CD14-positive monocyte (primary cell): ENCODE measurements at regions of chr20 and their contacts with region 1.

Region 1: DNA sequence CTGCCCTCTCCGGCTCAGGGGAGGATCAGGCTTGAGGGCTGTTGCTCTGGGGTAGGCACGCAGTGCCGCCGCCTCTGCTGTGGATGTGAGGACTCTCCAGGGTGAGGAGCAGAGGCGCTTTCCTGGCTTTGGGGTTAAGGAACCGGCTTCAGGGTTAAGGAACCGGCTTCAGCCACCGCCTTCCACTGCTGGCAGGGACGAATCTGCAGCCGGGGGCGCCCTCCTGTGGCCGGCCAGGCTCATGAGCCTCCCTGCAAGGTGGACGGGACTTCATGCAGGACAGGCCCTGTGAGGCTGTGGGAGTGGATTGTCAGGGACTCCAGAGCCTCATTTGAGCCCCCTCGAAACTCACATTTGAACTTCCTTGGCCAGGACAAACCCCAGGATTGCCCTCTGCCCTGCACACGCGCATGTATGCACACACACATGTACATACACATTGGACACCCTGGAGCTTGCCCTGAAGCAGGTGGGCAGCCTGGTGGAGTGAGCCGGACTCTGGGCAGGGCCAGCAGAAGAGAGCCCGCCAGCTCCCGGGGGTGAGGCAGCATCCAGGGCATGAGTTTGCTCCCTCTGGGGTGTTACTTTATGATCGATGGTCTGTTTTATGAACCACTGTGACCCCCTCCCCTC is 146.8 kb downstream of the PHACTR3 start:
- DNase-seq: peak; percentile 57 to 73 (median 69)
- H3K4me3 ChIP-seq: no peak overlapping the region
- H3K4me3 Mint-ChIP-seq: peak overlapping the region in 1 of 2 donors; percentile 88
- H3K27ac ChIP-seq: no peak overlapping the region
- H3K27ac Mint-ChIP-seq: peak overlapping the region in 2 of 7 donors; percentile 42 to 51
- H3K4me1 ChIP-seq: peaks cover 33 to 37% of the 10 kb centered on the region in 2 donors
- H3K4me1 Mint-ChIP-seq: peaks cover 37% of the 10 kb centered on the region
- H3K27me3 ChIP-seq: peaks cover 14 to 70% of the 10 kb centered on the region in 2 donors
- H3K27me3 Mint-ChIP-seq: peaks cover 76 to 93% (median 80%) of the 10 kb centered on the region in 3 donors
- CTCF ChIP-seq: peak; percentile 90

Region 2: DNA sequence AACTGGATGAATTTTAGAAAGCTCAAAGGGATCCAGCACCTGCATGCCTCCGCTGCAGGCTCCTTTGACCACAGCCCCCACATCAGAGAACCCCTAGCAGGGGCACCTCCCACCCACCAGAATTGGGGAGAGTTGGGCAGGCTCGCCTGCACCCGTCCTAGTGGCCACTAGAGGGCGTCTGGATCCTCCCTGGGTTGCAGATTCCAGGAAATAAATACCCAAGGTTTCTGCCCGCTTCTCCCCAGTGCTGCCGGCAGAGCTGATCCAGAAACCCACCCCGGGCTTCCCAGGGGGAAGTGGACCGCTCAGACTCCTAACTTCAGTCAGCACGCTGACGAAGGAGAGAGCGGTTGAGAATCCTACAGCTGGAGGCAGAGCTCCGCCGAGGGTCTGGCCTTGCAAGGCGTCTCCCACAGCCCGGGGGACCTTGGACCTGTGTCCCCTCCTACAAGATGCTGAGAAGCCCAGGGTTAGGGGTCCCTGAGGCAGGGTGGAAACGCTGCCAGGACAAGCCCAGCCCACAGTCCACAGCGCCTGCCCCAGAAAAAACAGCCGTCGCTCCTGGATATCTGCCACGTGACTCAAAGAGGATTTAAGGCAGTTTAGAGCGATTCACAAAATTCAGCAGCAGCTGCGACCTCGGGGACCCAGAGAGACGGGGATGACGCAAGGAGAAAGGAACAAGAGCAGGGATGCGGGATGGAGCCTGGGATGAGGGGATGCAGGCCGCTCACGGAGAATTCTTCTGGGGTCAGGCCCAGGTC is 179.4 kb before region 1 on chr20:
- intact Hi-C with region 1: loop called (anchors 2 to 5 kb)
- DNase-seq: peak; percentile 29 to 54 (median 48)
- H3K4me3 ChIP-seq: peak overlapping the region; percentile 6 to 66 (median 14)
- H3K4me3 Mint-ChIP-seq: peak overlapping the region; percentile 65 to 78
- H3K27ac ChIP-seq: no peak overlapping the region
- H3K27ac Mint-ChIP-seq: no peak overlapping the region
- H3K4me1 ChIP-seq: peaks cover 4 to 6% of the 10 kb centered on the region in 2 donors
- H3K4me1 Mint-ChIP-seq: peaks cover 6% of the 10 kb centered on the region
- H3K27me3 ChIP-seq: peaks cover 4 to 34% of the 10 kb centered on the region in 2 donors
- H3K27me3 Mint-ChIP-seq: peaks cover 33 to 44% (median 37%) of the 10 kb centered on the region in 3 donors
- CTCF ChIP-seq: peak; percentile 98

Region 3: DNA sequence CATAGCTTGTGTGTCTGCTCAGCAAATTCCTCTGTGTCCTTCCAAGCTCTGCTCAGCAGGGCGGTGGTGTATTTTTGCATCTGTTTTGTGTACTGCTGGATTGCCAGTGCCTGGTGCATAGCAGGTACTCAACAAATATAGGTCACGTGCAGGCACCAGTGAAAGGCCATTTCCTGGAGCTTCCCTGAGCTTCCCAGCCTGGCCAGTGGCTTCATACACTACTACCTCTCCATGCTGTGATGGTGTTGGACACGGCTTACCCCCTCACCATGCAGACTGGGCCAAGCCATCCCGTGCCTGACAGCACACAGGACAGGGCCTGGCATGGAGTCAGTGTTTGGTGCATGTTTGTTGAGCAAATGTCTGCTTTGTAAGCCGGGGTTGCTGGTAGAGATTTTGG is 154.5 kb before region 1 on chr20:
- intact Hi-C with region 1: loop called (anchors 1 to 2 kb)
- DNase-seq: no peak
- H3K4me3 ChIP-seq: no peak overlapping the region
- H3K4me3 Mint-ChIP-seq: peak overlapping the region in 1 of 2 donors; percentile 37
- H3K27ac ChIP-seq: no peak overlapping the region
- H3K27ac Mint-ChIP-seq: no peak overlapping the region
- H3K4me1 ChIP-seq: no peaks in the 10 kb centered on the region
- H3K4me1 Mint-ChIP-seq: peaks cover 3% of the 10 kb centered on the region
- H3K27me3 ChIP-seq: peaks cover 4 to 40% of the 10 kb centered on the region in 2 donors
- H3K27me3 Mint-ChIP-seq: peaks cover 34 to 55% (median 53%) of the 10 kb centered on the region in 3 donors
- CTCF ChIP-seq: no peak

Region 4: GRCh38 chr20:59782986-59783640 is 31.9 kb after region 1 on chr20:
- intact Hi-C with region 1: no loop called
- DNase-seq: peak in 2 of 3 donors; percentile 11 to 21
- H3K4me3 ChIP-seq: no peak overlapping the region
- H3K4me3 Mint-ChIP-seq: no peak overlapping the region
- H3K27ac ChIP-seq: no peak overlapping the region
- H3K27ac Mint-ChIP-seq: no peak overlapping the region
- H3K4me1 ChIP-seq: peaks cover 25 to 28% of the 10 kb centered on the region in 2 donors
- H3K4me1 Mint-ChIP-seq: peaks cover 31% of the 10 kb centered on the region
- H3K27me3 ChIP-seq: no peaks in the 10 kb centered on the region
- H3K27me3 Mint-ChIP-seq: peaks cover 0 to 4% (median 3%) of the 10 kb centered on the region in 3 donors
- CTCF ChIP-seq: peak; percentile 85